ENCODE measurements at regions of chrX and their contacts with region 1.

Region 1: DNA sequence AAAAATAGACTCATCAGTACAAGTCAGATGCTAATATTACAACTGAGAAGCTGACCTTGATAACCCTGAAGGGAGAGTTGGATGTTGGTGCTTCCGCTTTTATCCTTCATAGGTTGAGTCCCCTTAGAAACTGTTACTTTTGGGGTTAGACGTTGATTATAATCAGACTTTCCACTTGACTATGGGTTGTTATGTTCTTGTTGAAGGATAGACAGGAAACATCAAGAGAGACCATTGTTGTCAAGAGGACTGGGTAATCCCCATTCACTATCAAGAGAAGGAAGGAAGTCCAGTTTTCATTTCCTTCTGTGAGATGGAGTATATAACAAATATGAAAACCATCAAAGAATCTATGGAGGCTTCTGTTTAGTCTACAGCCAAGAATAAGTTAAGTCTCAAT is 229.9 kb upstream of the AFF2 start:
- DNase-seq: no peak
- H3K4me3 Mint-ChIP-seq: no peak overlapping the region
- H3K27ac Mint-ChIP-seq: no peak overlapping the region
- H3K4me1 Mint-ChIP-seq: no peaks in the 10 kb centered on the region
- H3K27me3 Mint-ChIP-seq: no peaks in the 10 kb centered on the region
- CTCF ChIP-seq: no peak

Region 2: GRCh38 chrX:148185631-148186030 is 84.9 kb before region 1 on chrX:
- CTCF ChIA-PET with region 1: no interaction called
- intact Hi-C with region 1: no loop called
- DNase-seq: no peak
- H3K4me3 Mint-ChIP-seq: no peak overlapping the region
- H3K27ac Mint-ChIP-seq: no peak overlapping the region
- H3K4me1 Mint-ChIP-seq: no peaks in the 10 kb centered on the region
- H3K27me3 Mint-ChIP-seq: no peaks in the 10 kb centered on the region
- CTCF ChIP-seq: no peak

Region 3: GRCh38 chrX:148282504-148282903 is 12.0 kb after region 1 on chrX:
- CTCF ChIA-PET with region 1: no interaction called
- intact Hi-C with region 1: loop called (anchors 1 kb)
- DNase-seq: no peak
- H3K4me3 Mint-ChIP-seq: no peak overlapping the region
- H3K27ac Mint-ChIP-seq: no peak overlapping the region
- H3K4me1 Mint-ChIP-seq: no peaks in the 10 kb centered on the region
- H3K27me3 Mint-ChIP-seq: no peaks in the 10 kb centered on the region
- CTCF ChIP-seq: no peak

Region 4: DNA sequence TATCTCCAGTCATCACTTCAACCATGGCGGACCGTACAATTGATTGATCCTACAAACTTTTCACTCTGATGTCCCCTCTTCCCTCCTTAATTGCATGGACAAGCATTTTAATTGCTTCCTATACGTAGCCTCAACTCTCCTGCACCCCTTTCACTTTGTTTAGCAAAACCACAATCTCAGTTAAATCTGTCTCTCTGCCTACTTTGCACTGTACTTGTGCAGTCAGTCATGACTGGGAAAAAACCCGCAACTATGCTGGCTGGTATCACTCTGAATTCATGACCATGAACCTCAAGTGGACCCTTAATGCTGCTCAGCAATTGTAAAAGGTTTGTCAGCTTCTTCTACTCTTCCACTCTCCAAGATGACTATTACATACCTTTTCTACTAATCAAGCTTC is 178.2 kb after region 1 on chrX:
- CTCF ChIA-PET with region 1: no interaction called
- intact Hi-C with region 1: no loop called
- DNase-seq: no peak
- H3K4me3 Mint-ChIP-seq: no peak overlapping the region
- H3K27ac Mint-ChIP-seq: no peak overlapping the region
- H3K4me1 Mint-ChIP-seq: no peaks in the 10 kb centered on the region
- H3K27me3 Mint-ChIP-seq: no peaks in the 10 kb centered on the region
- CTCF ChIP-seq: no peak

Measured in Calu3 (cell line).